ENCODE measurements at regions of chr12 and their contacts with region 1.

Region 1: GRCh38 chr12:54359033-54359761 is 5.1 kb downstream of the GPR84 start:
- DNase-seq: peak; percentile 99
- ATAC-seq: peak; percentile 89
- H3K4me3 ChIP-seq: peak overlapping the region; percentile 49 to 68
- H3K27ac ChIP-seq: peak overlapping the region; percentile 61
- H3K4me1 ChIP-seq: peaks cover 26 to 36% of the 10 kb centered on the region in 2 experiments
- H3K27me3 ChIP-seq: no peaks in the 10 kb centered on the region
- CTCF ChIP-seq: no peak
- POLR2A ChIP-seq: no peak
- RAD21 ChIP-seq: no peak

Region 2: GRCh38 chr12:54220092-54220557 is 139.1 kb before region 1 on chr12:
- CTCF ChIA-PET with region 1: interaction called, 11 read pairs
- POLR2A ChIA-PET with region 1: no interaction called
- RAD21 ChIA-PET with region 1: interaction called in 1 of 2 experiments, 4 read pairs
- intact Hi-C with region 1: loop called (anchors 1 kb)
- DNase-seq: peak; percentile 56
- ATAC-seq: peak; percentile 71
- H3K4me3 ChIP-seq: peak overlapping the region; percentile 28 to 47
- H3K27ac ChIP-seq: peak overlapping the region; percentile 37; the same call in 1 of the 2 replicates
- H3K4me1 ChIP-seq: peaks cover 6 to 38% of the 10 kb centered on the region in 2 experiments
- H3K27me3 ChIP-seq: no peaks in the 10 kb centered on the region
- CTCF ChIP-seq: peak; percentile 74 to 95 (median 84)
- POLR2A ChIP-seq: no peak
- RAD21 ChIP-seq: peak; percentile 93

Region 3: GRCh38 chr12:54285150-54286041 is 73.8 kb before region 1 on chr12:
- CTCF ChIA-PET with region 1: interaction called, 8 read pairs
- POLR2A ChIA-PET with region 1: interaction called, 14 read pairs
- RAD21 ChIA-PET with region 1: interaction called in 1 of 2 experiments, 3 read pairs
- intact Hi-C with region 1: loop called (anchors 2 kb)
- DNase-seq: no peak
- ATAC-seq: no peak
- H3K4me3 ChIP-seq: no peak overlapping the region
- H3K27ac ChIP-seq: 0 out of 2 replicates have a peak overlapping the region, but pooled peaks have one; percentile 16
- H3K4me1 ChIP-seq: peaks cover 11 to 65% of the 10 kb centered on the region in 2 experiments; a peak in 3 of 4 replicates
- H3K27me3 ChIP-seq: no peaks in the 10 kb centered on the region
- CTCF ChIP-seq: peak in 2 of 3 experiments; percentile 23 to 48; a peak in 2 of 6 replicates
- POLR2A ChIP-seq: no peak
- RAD21 ChIP-seq: no peak

Region 4: DNA sequence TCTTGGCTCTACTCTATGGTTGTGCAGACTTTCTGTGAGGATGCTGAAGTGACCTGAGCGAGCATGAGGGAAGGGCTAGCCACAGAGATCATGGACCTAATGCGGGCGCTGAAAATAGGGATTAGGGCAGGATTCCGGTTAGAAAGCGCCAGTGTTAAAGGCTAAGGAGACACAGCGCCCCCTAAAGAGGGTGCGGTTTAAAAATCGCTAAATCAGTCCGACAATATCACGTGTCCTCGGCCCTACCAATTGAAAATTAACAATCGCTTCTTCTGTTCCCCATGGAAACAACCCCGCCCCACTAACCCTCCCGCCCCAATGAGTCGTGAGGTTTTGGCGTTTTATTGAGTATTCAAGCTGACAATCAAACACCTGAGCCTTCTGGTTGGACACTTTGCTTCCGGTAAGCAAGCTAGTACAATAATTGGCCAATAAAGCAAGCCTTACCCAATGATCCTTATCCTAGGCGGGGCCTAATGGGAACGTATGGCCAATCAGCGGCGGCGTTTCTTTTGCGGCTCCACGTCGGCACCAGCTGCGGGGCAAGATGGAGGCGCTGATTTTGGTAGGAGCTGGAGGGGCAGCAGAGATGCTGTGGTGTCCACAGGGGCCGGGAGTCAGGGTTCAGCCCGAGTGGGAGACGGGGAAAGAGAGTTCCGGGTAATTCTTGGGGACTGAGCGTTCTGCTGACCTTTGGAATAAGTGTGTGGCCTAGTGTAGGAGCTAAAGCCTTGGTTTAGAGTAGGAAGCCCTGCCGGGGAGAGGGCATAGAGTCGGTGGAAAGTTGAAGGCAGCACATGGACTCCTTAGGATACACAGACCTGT is 34.4 kb before region 1 on chr12 and contains the start of gene COPZ1:
- CTCF ChIA-PET with region 1: interaction called, 26 read pairs
- POLR2A ChIA-PET with region 1: interaction called, 10 read pairs
- RAD21 ChIA-PET with region 1: interaction called in 1 of 2 experiments, 4 read pairs
- intact Hi-C with region 1: loop called (anchors 5 kb)
- DNase-seq: peak; percentile 99
- ATAC-seq: peak; percentile 86
- H3K4me3 ChIP-seq: peak within 1 kb of the TSS; percentile 98
- H3K27ac ChIP-seq: peak within 1 kb of the TSS; percentile 90
- H3K4me1 ChIP-seq: peaks cover 35 to 43% of the 10 kb centered on the region in 2 experiments
- H3K27me3 ChIP-seq: no peaks in the 10 kb centered on the region
- CTCF ChIP-seq: peak; percentile 79 to 85 (median 79)
- POLR2A ChIP-seq: peak; percentile 63
- RAD21 ChIP-seq: peak; percentile 90
- total RNA-seq, gene COPZ1: 191 TPM

Region 5: GRCh38 chr12:54379401-54380201 is 20.4 kb after region 1 on chr12:
- CTCF ChIA-PET with region 1: interaction called, 14 read pairs
- POLR2A ChIA-PET with region 1: interaction called, 4 read pairs
- RAD21 ChIA-PET with region 1: no interaction called
- intact Hi-C with region 1: no loop called
- DNase-seq: peak; percentile 74
- ATAC-seq: peak; percentile 83
- H3K4me3 ChIP-seq: peak overlapping the region; percentile 45 to 66
- H3K27ac ChIP-seq: peak overlapping the region; percentile 77
- H3K4me1 ChIP-seq: peaks cover 21 to 59% of the 10 kb centered on the region in 2 experiments
- H3K27me3 ChIP-seq: no peaks in the 10 kb centered on the region
- CTCF ChIP-seq: peak in 2 of 3 experiments; percentile 100; a peak in 4 of 6 replicates
- POLR2A ChIP-seq: no peak
- RAD21 ChIP-seq: no peak

Region 6: GRCh38 chr12:54419088-54419892 is 60.1 kb after region 1 on chr12 and contains the start of gene ITGA5:
- CTCF ChIA-PET with region 1: no interaction called
- POLR2A ChIA-PET with region 1: no interaction called
- RAD21 ChIA-PET with region 1: no interaction called
- intact Hi-C with region 1: no loop called
- DNase-seq: peak; percentile 18
- ATAC-seq: peak; percentile 87
- H3K4me3 ChIP-seq: peak within 1 kb of the TSS; percentile 87 to 95
- H3K27ac ChIP-seq: peak within 1 kb of the TSS; percentile 77
- H3K4me1 ChIP-seq: peaks cover 19 to 70% of the 10 kb centered on the region in 2 experiments
- H3K27me3 ChIP-seq: no peaks in the 10 kb centered on the region
- CTCF ChIP-seq: no peak
- POLR2A ChIP-seq: peak; percentile 51
- RAD21 ChIP-seq: no peak
- total RNA-seq, gene ITGA5: 49.7 TPM

Region 7: GRCh38 chr12:54431911-54432814 is 73.0 kb after region 1 on chr12:
- CTCF ChIA-PET with region 1: no interaction called
- POLR2A ChIA-PET with region 1: no interaction called
- RAD21 ChIA-PET with region 1: no interaction called
- intact Hi-C with region 1: no loop called
- DNase-seq: no peak
- ATAC-seq: peak; percentile 63
- H3K4me3 ChIP-seq: no peak overlapping the region
- H3K27ac ChIP-seq: no peak overlapping the region
- H3K4me1 ChIP-seq: peaks cover 7 to 16% of the 10 kb centered on the region in 2 experiments
- H3K27me3 ChIP-seq: no peaks in the 10 kb centered on the region
- CTCF ChIP-seq: no peak
- POLR2A ChIP-seq: no peak
- RAD21 ChIP-seq: no peak